Caco-2 (cell line): ENCODE measurements at regions of chr3 and their contacts with region 1.

Region 1: GRCh38 chr3:94336046-94336710 is 273.3 kb downstream of the NSUN3 start:
- DNase-seq: peak in 1 of 2 experiments; percentile 52
- H3K4me3 ChIP-seq: no peak overlapping the region
- H3K4me3 Mint-ChIP-seq: peak overlapping the region; percentile 2
- H3K27ac Mint-ChIP-seq: peak overlapping the region; percentile 15
- H3K4me1 ChIP-seq: peaks cover 7% of the 10 kb centered on the region; the same call in 1 of the 2 replicates
- H3K4me1 Mint-ChIP-seq: peaks cover 28% of the 10 kb centered on the region
- H3K27me3 ChIP-seq: no peaks in the 10 kb centered on the region
- H3K27me3 Mint-ChIP-seq: no peaks in the 10 kb centered on the region
- CTCF ChIP-seq: peak; percentile 41 to 62

Region 2: GRCh38 chr3:94062431-94063404 is 273.5 kb before region 1 on chr3 and contains the starts of genes DHFR2 and NSUN3:
- CTCF ChIA-PET with region 1: no interaction called
- POLR2A ChIA-PET with region 1: no interaction called
- intact Hi-C with region 1: no loop called
- DNase-seq: peak; percentile 90 to 95
- H3K4me3 ChIP-seq: peak within 1 kb of the TSS; percentile 47
- H3K4me3 Mint-ChIP-seq: peak within 1 kb of the TSS; percentile 98
- H3K27ac Mint-ChIP-seq: peak within 1 kb of the TSS; percentile 99
- H3K4me1 ChIP-seq: peaks cover 4% of the 10 kb centered on the region; the same call in 1 of the 2 replicates
- H3K4me1 Mint-ChIP-seq: peaks cover 8% of the 10 kb centered on the region
- H3K27me3 ChIP-seq: no peaks in the 10 kb centered on the region
- H3K27me3 Mint-ChIP-seq: no peaks in the 10 kb centered on the region
- CTCF ChIP-seq: no peak
- total RNA-seq, gene DHFR2: 3.3 and 3.7 TPM in 2 replicates
- total RNA-seq, gene NSUN3: 7.1 and 9.6 TPM in 2 replicates

Region 3: GRCh38 chr3:94115482-94115881 is 220.7 kb before region 1 on chr3:
- CTCF ChIA-PET with region 1: no interaction called
- POLR2A ChIA-PET with region 1: no interaction called
- intact Hi-C with region 1: loop called (anchors 1 kb)
- DNase-seq: peak in 1 of 2 experiments; percentile 21
- H3K4me3 ChIP-seq: no peak overlapping the region
- H3K4me3 Mint-ChIP-seq: no peak overlapping the region
- H3K27ac Mint-ChIP-seq: no peak overlapping the region
- H3K4me1 ChIP-seq: no peaks in the 10 kb centered on the region
- H3K4me1 Mint-ChIP-seq: no peaks in the 10 kb centered on the region
- H3K27me3 ChIP-seq: no peaks in the 10 kb centered on the region
- H3K27me3 Mint-ChIP-seq: no peaks in the 10 kb centered on the region
- CTCF ChIP-seq: peak in 1 of 2 experiments; percentile 45

Region 4: GRCh38 chr3:94285870-94286269 is 50.3 kb before region 1 on chr3:
- CTCF ChIA-PET with region 1: no interaction called
- POLR2A ChIA-PET with region 1: no interaction called
- intact Hi-C with region 1: no loop called
- DNase-seq: no peak
- H3K4me3 ChIP-seq: no peak overlapping the region
- H3K4me3 Mint-ChIP-seq: no peak overlapping the region
- H3K27ac Mint-ChIP-seq: no peak overlapping the region
- H3K4me1 ChIP-seq: no peaks in the 10 kb centered on the region
- H3K4me1 Mint-ChIP-seq: no peaks in the 10 kb centered on the region
- H3K27me3 ChIP-seq: no peaks in the 10 kb centered on the region
- H3K27me3 Mint-ChIP-seq: no peaks in the 10 kb centered on the region
- CTCF ChIP-seq: no peak

Region 5: DNA sequence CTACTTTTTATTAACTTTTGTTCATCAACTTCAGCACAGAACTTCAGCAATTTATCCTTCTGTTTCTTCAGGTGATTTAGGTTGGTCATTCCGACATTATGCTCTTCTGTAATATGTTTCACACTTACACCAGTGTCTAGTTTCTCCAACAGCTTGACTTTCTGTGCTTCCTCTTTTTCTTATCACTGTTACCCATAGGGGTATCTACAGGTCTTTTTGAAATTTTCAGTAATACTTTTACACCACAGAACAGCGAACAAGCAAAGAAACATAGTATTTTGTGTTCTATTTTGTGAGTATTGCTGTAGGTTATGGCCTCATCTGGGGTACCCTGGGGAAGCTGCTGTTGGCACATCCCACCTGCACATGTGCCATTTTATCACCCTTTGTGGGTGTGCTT is 12.6 kb before region 1 on chr3:
- CTCF ChIA-PET with region 1: no interaction called
- POLR2A ChIA-PET with region 1: no interaction called
- intact Hi-C with region 1: no loop called
- DNase-seq: no peak
- H3K4me3 ChIP-seq: no peak overlapping the region
- H3K4me3 Mint-ChIP-seq: no peak overlapping the region
- H3K27ac Mint-ChIP-seq: no peak overlapping the region
- H3K4me1 ChIP-seq: no peaks in the 10 kb centered on the region
- H3K4me1 Mint-ChIP-seq: no peaks in the 10 kb centered on the region
- H3K27me3 ChIP-seq: no peaks in the 10 kb centered on the region
- H3K27me3 Mint-ChIP-seq: no peaks in the 10 kb centered on the region
- CTCF ChIP-seq: no peak

Region 6: GRCh38 chr3:94573337-94573736 is 237.2 kb after region 1 on chr3:
- CTCF ChIA-PET with region 1: no interaction called
- POLR2A ChIA-PET with region 1: no interaction called
- intact Hi-C with region 1: no loop called
- DNase-seq: no peak
- H3K4me3 ChIP-seq: no peak overlapping the region
- H3K4me3 Mint-ChIP-seq: no peak overlapping the region
- H3K27ac Mint-ChIP-seq: no peak overlapping the region
- H3K4me1 ChIP-seq: no peaks in the 10 kb centered on the region
- H3K4me1 Mint-ChIP-seq: no peaks in the 10 kb centered on the region
- H3K27me3 ChIP-seq: no peaks in the 10 kb centered on the region
- H3K27me3 Mint-ChIP-seq: no peaks in the 10 kb centered on the region
- CTCF ChIP-seq: no peak